ENCODE measurements at regions of chr7 and their contacts with region 1.

Region 1: DNA sequence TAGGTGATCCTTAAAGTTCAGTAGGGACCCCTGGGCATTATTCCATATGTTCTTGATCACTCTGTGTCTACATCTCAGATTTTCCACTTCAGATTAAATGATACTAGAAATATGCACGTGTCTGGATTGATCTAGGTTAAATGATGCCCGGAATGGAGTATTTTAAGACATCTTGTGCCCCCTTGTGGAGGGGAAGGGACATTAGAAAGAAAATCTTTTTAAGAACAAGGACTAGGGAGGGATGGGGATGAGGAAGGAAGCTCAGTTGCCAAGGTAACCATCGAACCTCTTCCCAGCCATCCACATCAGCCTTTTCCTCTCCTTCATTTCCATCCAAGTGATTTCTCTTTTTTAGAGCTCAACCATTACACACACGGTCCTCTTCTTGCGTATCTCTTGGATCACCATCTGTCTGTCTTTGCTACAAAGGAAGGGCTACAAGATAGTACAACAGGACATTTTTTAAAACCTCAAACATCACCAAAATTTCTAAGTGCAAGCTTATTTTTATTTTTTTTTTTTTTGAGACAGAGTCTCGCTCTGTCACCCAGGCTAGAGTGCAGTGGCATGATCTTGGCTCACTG is 40.5 kb downstream of the PRSS2 start:
- H3K4me3 ChIP-seq: no peak overlapping the region
- H3K27ac ChIP-seq: no peak overlapping the region
- H3K4me1 ChIP-seq: no peaks in the 10 kb centered on the region
- CTCF ChIP-seq: no peak; the same call in 1 of the 2 replicates

Region 2: DNA sequence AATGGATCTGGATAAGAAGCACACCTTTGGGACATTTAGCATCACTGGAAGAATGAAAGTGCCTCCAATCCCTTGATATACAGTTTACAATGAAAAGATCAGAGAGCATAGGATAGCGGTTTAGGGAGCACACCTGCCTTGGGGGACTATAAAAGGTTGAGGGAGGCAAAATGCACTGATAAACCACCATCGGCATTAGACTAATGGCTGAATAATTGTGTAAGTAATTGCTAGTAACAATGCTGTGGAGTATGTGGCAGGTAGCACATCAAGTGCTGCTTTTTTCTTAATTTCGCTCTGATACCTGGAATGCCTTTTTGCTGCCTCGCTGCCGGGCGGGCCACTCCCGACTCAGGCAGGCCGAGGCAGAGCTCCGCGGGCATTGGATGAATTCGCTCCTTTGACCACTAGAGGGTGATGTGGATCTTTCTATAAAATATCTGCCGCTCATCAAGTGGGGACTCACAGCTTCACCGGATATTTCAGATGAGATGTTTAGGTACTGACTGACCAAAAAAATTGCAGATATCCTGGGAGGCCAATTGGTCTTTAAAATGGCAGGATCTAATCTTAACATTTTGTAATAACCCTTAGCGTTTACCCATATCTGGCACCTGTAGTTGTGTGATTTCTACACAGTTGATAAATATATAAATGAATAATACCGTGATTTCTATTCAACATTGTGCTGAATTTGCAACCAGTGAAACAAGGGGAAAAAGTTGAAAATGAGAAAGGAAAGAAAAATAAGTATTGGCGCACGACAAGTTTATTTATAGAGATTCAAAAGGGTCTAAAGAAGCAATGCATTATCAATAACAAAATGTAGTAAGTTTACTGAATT is 178.7 kb before region 1 on chr7:
- CTCF ChIA-PET with region 1: interaction called, 46 read pairs
- POLR2A ChIA-PET with region 1: no interaction called
- H3K4me3 ChIP-seq: no peak overlapping the region
- H3K27ac ChIP-seq: no peak overlapping the region
- H3K4me1 ChIP-seq: no peaks in the 10 kb centered on the region
- CTCF ChIP-seq: peak; percentile 51; the same call in 1 of the 2 replicates

Region 3: GRCh38 chr7:142654398-142654797 is 156.8 kb before region 1 on chr7:
- CTCF ChIA-PET with region 1: no interaction called
- POLR2A ChIA-PET with region 1: no interaction called
- H3K4me3 ChIP-seq: no peak overlapping the region
- H3K27ac ChIP-seq: no peak overlapping the region
- H3K4me1 ChIP-seq: no peaks in the 10 kb centered on the region
- CTCF ChIP-seq: no peak

Region 4: GRCh38 chr7:142788303-142789289 is 22.6 kb before region 1 on chr7:
- CTCF ChIA-PET with region 1: interaction called, 43 read pairs
- POLR2A ChIA-PET with region 1: no interaction called
- H3K4me3 ChIP-seq: no peak overlapping the region
- H3K27ac ChIP-seq: no peak overlapping the region
- H3K4me1 ChIP-seq: no peaks in the 10 kb centered on the region
- CTCF ChIP-seq: no peak